ENCODE measurements at regions of chr11 and their contacts with region 1.

Region 1: DNA sequence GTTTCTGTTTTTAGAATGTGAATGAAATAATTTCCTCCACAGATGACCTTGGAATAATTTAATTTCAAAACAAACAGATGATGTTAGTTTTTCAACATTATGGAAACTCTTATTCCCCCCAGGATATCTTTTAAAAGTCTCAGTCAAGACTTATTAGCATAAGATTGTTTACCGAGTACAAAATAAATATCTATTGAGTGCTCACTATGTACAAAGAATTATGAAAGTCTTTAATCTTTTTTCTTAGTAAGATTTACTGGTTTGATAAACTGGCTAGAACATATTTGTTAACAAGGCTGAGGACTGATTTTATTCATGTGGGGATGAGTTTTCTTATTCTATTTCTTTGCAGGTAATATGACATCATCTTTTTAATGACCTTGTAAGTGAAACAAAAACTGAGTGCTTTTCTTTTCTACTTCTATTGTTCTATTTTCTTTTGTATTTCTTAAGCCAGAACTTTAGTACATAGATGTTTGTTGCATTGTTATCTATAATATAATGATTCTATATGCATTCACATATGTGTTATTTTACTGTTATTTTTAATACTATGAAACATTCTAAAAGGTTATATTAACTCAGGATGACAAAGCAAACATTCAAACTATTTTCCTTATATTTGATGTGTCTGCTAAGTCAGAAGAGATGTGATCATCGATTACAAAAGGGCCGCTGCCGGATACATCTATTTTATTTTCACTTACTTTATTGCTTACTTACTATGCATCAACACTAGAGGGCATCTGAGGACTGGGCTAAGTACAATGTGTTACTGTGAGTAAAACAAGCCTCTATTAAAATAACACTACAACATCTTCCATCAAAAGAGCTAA is 111.0 kb upstream of the ARHGAP42 start:
- DNase-seq: peak; percentile 27 to 53 (median 42)
- ATAC-seq: peak; percentile 80
- H3K4me3 ChIP-seq: no peak overlapping the region
- H3K27ac ChIP-seq: no peak overlapping the region
- H3K4me1 ChIP-seq: no peaks in the 10 kb centered on the region
- H3K27me3 ChIP-seq: no peaks in the 10 kb centered on the region
- CTCF ChIP-seq: peak; percentile 43 to 78 (median 57); a peak in 4 of 6 replicates
- EP300 ChIP-seq: no peak
- POLR2A ChIP-seq: no peak
- RAD21 ChIP-seq: peak; percentile 90 to 92

Region 2: GRCh38 chr11:100308202-100308601 is 267.9 kb before region 1 on chr11:
- CTCF ChIA-PET with region 1: no interaction called
- POLR2A ChIA-PET with region 1: no interaction called
- in situ Hi-C with region 1: no loop called
- intact Hi-C with region 1: no loop called
- DNase-seq: no peak
- ATAC-seq: no peak
- H3K4me3 ChIP-seq: no peak overlapping the region
- H3K27ac ChIP-seq: no peak overlapping the region
- H3K4me1 ChIP-seq: no peaks in the 10 kb centered on the region
- H3K27me3 ChIP-seq: no peaks in the 10 kb centered on the region
- CTCF ChIP-seq: no peak
- EP300 ChIP-seq: no peak
- POLR2A ChIP-seq: no peak
- RAD21 ChIP-seq: no peak

Region 3: GRCh38 chr11:100681064-100681502 is 105.0 kb after region 1 on chr11:
- CTCF ChIA-PET with region 1: no interaction called
- POLR2A ChIA-PET with region 1: no interaction called
- in situ Hi-C with region 1: no loop called
- intact Hi-C with region 1: loop called (anchors 5 kb)
- DNase-seq: peak; percentile 18 to 71 (median 38)
- ATAC-seq: peak; percentile 96
- H3K4me3 ChIP-seq: no peak overlapping the region
- H3K27ac ChIP-seq: peak overlapping the region; percentile 30; the same call in 1 of the 3 replicates
- H3K4me1 ChIP-seq: no peaks in the 10 kb centered on the region; a peak in 2 of 5 replicates
- H3K27me3 ChIP-seq: no peaks in the 10 kb centered on the region
- CTCF ChIP-seq: no peak
- EP300 ChIP-seq: no peak
- POLR2A ChIP-seq: no peak
- RAD21 ChIP-seq: no peak

Region 4: DNA sequence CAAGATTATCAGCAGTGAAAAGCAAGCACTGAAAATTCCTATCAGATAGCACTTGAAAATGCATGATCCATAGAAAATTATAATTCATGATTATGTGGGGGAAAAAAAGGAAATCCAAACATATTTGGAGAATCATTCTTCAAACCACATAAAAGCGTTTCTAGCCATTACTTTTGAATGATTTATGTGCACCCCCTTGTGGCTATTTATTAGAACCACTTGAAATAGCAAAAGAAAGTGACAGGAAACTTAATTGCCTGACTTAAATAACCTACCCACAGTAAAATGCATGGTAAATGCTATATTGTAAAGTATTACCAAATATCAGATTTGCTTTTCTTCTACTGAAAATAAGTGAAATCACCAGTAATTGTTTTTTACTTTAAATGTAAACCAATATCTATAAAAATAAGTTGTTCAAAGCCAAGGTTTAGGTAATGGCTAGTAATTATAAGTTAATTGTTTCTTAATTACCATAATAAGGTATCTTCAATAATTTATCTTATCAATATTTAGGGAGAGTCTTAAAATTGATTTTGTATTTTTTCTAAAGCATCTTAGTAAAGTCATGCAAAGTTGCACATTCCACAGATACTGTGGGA is 279.5 kb after region 1 on chr11:
- CTCF ChIA-PET with region 1: interaction called, 19 read pairs
- POLR2A ChIA-PET with region 1: no interaction called
- in situ Hi-C with region 1: no loop called
- intact Hi-C with region 1: loop called (anchors 1 kb)
- DNase-seq: peak; percentile 13 to 44 (median 18)
- ATAC-seq: peak; percentile 47; the same call in 1 of the 3 replicates
- H3K4me3 ChIP-seq: no peak overlapping the region
- H3K27ac ChIP-seq: no peak overlapping the region
- H3K4me1 ChIP-seq: no peaks in the 10 kb centered on the region; a peak in 1 of 5 replicates
- H3K27me3 ChIP-seq: no peaks in the 10 kb centered on the region
- CTCF ChIP-seq: peak; percentile 29 to 65 (median 32); a peak in 3 of 6 replicates
- EP300 ChIP-seq: no peak
- POLR2A ChIP-seq: no peak
- RAD21 ChIP-seq: peak; percentile 74 to 75

Region 5: GRCh38 chr11:101436511-101437142 is 860.5 kb after region 1 on chr11:
- CTCF ChIA-PET with region 1: no interaction called
- POLR2A ChIA-PET with region 1: no interaction called
- in situ Hi-C with region 1: no loop called
- intact Hi-C with region 1: loop called (anchors 10 kb)
- DNase-seq: peak; percentile 14 to 38 (median 19)
- ATAC-seq: 0 out of 3 replicates have a peak, but pooled peaks have one; percentile 48
- H3K4me3 ChIP-seq: no peak overlapping the region
- H3K27ac ChIP-seq: no peak overlapping the region
- H3K4me1 ChIP-seq: no peaks in the 10 kb centered on the region
- H3K27me3 ChIP-seq: no peaks in the 10 kb centered on the region
- CTCF ChIP-seq: peak; percentile 24 to 52 (median 42); a peak in 4 of 6 replicates
- EP300 ChIP-seq: no peak
- POLR2A ChIP-seq: no peak
- RAD21 ChIP-seq: peak; percentile 29 to 44; a peak in 3 of 4 replicates

Region 6: DNA sequence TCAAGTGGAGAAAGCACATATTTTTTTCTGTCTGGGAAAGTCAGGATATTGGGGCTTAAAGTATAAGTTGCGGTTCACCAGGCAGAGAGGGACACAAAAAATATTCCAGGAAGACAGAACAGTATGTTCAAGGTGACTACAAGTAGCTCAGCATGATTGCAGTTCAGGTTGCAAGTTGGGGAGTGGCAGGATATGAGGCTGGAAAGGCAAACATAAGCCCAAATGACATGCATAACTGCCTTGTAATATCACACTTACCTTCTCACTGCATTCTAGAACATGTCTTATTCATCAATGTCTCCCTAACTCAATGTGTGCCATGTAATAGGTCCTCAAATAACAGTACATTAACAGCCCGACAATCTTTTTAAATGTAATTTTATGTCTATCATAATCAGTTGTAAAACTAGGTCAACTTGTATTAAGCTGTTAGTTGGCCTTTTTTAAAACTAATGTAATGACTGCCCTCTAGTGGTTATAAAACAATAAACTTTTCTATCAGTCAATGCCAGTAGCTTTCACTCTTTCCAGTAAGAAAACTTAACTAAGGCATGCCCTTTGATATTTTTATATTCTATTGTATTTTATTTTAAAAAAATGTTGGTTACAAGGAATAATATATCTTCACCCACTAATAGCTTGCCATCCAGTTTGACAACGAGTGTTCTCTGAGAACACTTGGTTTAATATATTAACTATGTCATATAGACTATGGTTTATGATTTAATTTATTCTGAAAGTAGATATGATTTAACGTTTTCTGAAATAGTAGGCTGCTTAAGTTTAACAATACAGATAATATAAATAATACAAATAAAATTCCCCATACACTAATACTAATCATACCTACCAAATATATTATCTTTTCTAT is 1431.7 kb after region 1 on chr11:
- CTCF ChIA-PET with region 1: no interaction called
- POLR2A ChIA-PET with region 1: no interaction called
- in situ Hi-C with region 1: no loop called
- intact Hi-C with region 1: loop called (anchors 10 kb)
- DNase-seq: peak; percentile 12 to 36 (median 23)
- ATAC-seq: peak; percentile 63; the same call in 1 of the 3 replicates
- H3K4me3 ChIP-seq: no peak overlapping the region
- H3K27ac ChIP-seq: no peak overlapping the region
- H3K4me1 ChIP-seq: no peaks in the 10 kb centered on the region
- H3K27me3 ChIP-seq: no peaks in the 10 kb centered on the region
- CTCF ChIP-seq: peak; percentile 22 to 56 (median 31); a peak in 4 of 6 replicates
- EP300 ChIP-seq: no peak
- POLR2A ChIP-seq: no peak
- RAD21 ChIP-seq: peak; percentile 49 to 64